Endothelial cell of umbilical vein (primary cell): ENCODE measurements at regions of chr22 and their contacts with region 1.

Region 1: GRCh38 chr22:24402460-24403192 is 24.8 kb upstream of the ADORA2A start:
- DNase-seq: peak; percentile 97
- H3K4me3 ChIP-seq: no peak overlapping the region
- H3K27ac ChIP-seq: peak overlapping the region; percentile 78
- H3K4me1 ChIP-seq: peaks cover 53% of the 10 kb centered on the region
- H3K27me3 ChIP-seq: no peaks in the 10 kb centered on the region
- CTCF ChIP-seq: no peak
- POLR2A ChIP-seq: no peak

Region 2: DNA sequence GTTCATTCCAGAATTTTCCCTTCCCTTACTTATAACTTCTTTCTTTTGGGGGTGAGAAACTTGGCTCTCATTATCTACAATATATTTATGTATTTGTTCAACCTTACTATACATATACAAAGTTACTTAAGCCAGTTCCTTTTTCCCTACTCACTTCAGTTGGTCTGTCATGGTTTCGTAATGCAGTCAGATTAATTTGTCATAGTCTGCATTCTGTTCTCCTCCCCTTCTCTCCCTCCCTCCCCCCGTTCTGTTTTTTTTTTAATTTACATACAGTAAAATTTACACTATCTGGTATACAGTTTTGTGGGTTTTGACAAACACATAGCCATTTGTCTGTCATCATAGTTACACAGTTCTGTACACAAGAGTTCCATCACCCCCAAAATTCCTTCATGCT is 47.1 kb before region 1 on chr22:
- CTCF ChIA-PET with region 1: interaction called, 3 read pairs
- POLR2A ChIA-PET with region 1: no interaction called
- dilution Hi-C with region 1: no loop called
- intact Hi-C with region 1: loop called (anchors 5 kb)
- DNase-seq: no peak
- H3K4me3 ChIP-seq: no peak overlapping the region
- H3K27ac ChIP-seq: no peak overlapping the region
- H3K4me1 ChIP-seq: peaks cover 20% of the 10 kb centered on the region
- H3K27me3 ChIP-seq: no peaks in the 10 kb centered on the region
- CTCF ChIP-seq: no peak
- POLR2A ChIP-seq: no peak